ENCODE measurements at regions of chr1 and their contacts with region 1.

Region 1: DNA sequence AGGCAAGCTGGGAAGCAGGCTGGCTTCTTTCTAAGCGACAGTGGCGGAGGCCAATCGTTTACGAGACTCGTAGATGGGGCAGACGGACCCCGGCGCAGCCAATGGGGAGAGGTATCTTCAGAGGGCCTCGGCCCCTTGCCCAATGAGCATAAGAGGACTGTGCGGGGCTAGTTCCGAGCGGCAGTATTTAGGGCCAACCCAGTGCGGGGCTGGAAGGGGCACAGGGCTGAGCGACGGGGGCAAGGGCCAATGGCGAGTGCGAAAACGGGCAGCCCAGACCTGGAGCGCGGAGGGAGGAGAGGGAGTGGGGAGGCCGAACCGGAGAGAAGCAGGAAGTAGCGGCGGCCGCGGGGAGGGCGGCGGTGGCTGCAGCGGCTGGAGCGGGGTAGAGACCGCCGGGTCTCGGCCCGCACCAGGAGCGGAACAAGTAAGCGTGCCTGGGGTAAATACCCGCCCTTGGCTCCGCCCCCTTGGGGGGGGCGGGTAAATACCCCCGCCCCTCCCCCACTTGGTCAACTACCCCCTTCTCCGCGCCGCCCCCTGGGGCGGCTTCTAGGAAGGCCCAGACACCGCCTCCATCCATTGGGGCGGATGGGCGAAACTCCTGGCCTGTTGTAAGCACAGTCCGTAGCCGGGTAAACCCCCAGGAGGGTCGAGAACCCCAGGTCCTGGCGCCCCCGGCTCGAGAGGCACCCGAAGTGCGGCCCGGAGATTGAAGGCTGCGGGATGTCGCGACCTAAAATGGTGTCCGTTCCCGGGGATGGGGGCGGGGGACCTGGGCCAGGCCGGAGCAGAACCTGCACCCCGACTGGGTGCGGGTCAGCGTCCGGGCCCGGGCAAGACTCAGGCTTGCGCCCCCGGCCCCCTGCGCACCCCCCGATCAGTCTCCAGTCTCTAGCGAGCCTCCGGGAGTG is at the start of gene ZNF687:
- DNase-seq: peak; percentile 100
- H3K4me3 ChIP-seq: peak within 1 kb of the TSS; percentile 64 to 100 (median 88)
- H3K27ac ChIP-seq: peak within 1 kb of the TSS; percentile 91 to 100 (median 97)
- H3K27me3 ChIP-seq: no peaks in the 10 kb centered on the region
- CTCF ChIP-seq: peak in 13 of 56 donors; percentile 3 to 29 (median 11)
- total RNA-seq, gene ZNF687: 16.1 to 36.4 (median 25.3) TPM

Region 2: GRCh38 chr1:150661156-150661555 is 621.1 kb before region 1 on chr1:
- intact Hi-C with region 1: no loop called
- DNase-seq: no peak
- H3K4me3 ChIP-seq: no peak overlapping the region
- H3K27ac ChIP-seq: no peak overlapping the region
- H3K27me3 ChIP-seq: no peaks in the 10 kb centered on the region
- CTCF ChIP-seq: no peak

Region 3: DNA sequence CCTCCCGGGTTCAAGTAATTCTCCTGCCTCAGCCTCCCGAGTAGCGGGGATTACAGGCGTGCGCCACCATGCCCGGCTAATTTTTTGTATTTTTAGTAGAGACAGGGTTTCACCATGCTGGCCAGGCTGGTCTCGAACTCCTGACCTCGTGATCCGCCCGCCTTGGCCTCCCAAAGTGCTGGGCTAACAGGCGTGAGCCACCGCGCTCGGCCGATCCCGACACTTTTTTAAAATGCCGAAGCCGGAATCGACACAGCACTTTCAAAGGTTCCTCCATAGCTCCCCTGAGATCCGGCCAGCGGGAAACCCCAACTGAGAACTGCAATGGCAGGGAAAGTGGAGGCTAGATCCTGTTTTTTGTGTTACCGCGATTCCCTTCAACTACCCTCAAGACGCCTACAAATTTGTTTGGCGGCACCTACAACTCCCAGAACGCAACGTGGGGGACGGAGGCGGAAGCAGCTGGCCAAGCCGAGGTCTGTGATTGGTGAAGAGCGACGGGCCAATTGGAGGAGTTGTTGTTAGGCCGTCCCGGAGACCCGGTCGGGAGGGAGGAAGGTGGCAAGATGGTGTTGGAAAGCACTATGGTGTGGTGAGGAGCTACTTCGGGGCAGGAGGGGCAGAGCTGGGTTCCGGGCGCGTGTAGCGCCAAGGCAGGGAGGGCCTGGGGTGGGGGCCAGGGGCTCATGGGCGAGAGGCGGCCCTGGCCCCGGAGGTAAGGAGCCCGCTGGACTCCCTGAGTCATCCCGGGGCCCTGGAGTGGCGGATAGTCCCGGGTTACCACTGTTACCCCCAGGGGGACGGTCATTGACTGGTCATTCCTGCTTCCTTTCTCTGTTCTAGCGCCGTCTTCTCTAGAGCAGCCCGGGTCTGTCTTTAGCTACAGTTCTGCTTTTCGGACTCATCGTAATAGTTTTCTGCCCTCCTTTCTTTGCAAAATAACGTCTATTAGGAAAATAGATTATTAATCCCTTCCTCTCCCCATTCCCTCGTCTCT is 27.7 kb before region 1 on chr1 and contains the start of gene PSMD4:
- intact Hi-C with region 1: loop called in 1 of 2 experiments (anchors 2 kb)
- DNase-seq: peak; percentile 83 to 96 (median 94)
- H3K4me3 ChIP-seq: peak within 1 kb of the TSS; percentile 70 to 100 (median 97)
- H3K27ac ChIP-seq: peak within 1 kb of the TSS in 58 of 59 donors; percentile 28 to 96 (median 86)
- H3K27me3 ChIP-seq: no peaks in the 10 kb centered on the region
- CTCF ChIP-seq: peak in 32 of 56 donors; percentile 4 to 49 (median 28)
- total RNA-seq, gene PSMD4: 129 to 230 (median 181) TPM

Region 4: GRCh38 chr1:151327223-151327902 is 45.1 kb after region 1 on chr1 and contains the start of gene PI4KB:
- intact Hi-C with region 1: loop called (anchors 1 to 5 kb)
- DNase-seq: peak; percentile 58 to 94 (median 88)
- H3K4me3 ChIP-seq: peak within 1 kb of the TSS; percentile 49 to 96 (median 87)
- H3K27ac ChIP-seq: peak within 1 kb of the TSS; percentile 83 to 98 (median 95)
- H3K27me3 ChIP-seq: no peaks in the 10 kb centered on the region
- CTCF ChIP-seq: peak in 33 of 56 donors; percentile 7 to 45 (median 24)
- total RNA-seq, gene PI4KB: 67.1 to 120 (median 92.2) TPM

Region 5: GRCh38 chr1:151346769-151347522 is 64.7 kb after region 1 on chr1 and contains the start of gene RFX5:
- intact Hi-C with region 1: loop called in 1 of 2 experiments (anchors 1 kb)
- DNase-seq: peak; percentile 79 to 97 (median 95)
- H3K4me3 ChIP-seq: peak within 1 kb of the TSS; percentile 55 to 95 (median 76)
- H3K27ac ChIP-seq: peak within 1 kb of the TSS in 58 of 59 donors; percentile 27 to 96 (median 83)
- H3K27me3 ChIP-seq: no peaks in the 10 kb centered on the region
- CTCF ChIP-seq: peak in 27 of 56 donors; percentile 6 to 51 (median 28)
- total RNA-seq, gene RFX5: 21.1 to 65.9 (median 38.7) TPM

Region 6: GRCh38 chr1:151399890-151400495 is 117.8 kb after region 1 on chr1:
- intact Hi-C with region 1: loop called (anchors 2 to 10 kb)
- DNase-seq: peak in 1 of 10 donors; percentile 25
- H3K4me3 ChIP-seq: peak overlapping the region; percentile 58 to 100 (median 95)
- H3K27ac ChIP-seq: peak overlapping the region; percentile 63 to 97 (median 90)
- H3K27me3 ChIP-seq: no peaks in the 10 kb centered on the region
- CTCF ChIP-seq: no peak

Measured in dorsolateral prefrontal cortex (tissue), 120 donors.